ENCODE measurements at regions of chr7 and their contacts with region 1.

Region 1: GRCh38 chr7:41911792-41912191 is 208.9 kb upstream of the INHBA start:
- DNase-seq: no peak
- ATAC-seq: no peak
- H3K4me3 ChIP-seq: no peak overlapping the region
- H3K27ac ChIP-seq: no peak overlapping the region
- H3K4me1 ChIP-seq: no peaks in the 10 kb centered on the region
- H3K27me3 ChIP-seq: no peaks in the 10 kb centered on the region
- CTCF ChIP-seq: no peak
- EP300 ChIP-seq: no peak
- POLR2A ChIP-seq: no peak
- RAD21 ChIP-seq: no peak

Region 2: GRCh38 chr7:41837916-41838315 is 73.9 kb before region 1 on chr7:
- CTCF ChIA-PET with region 1: no interaction called
- POLR2A ChIA-PET with region 1: no interaction called
- in situ Hi-C with region 1: no loop called
- intact Hi-C with region 1: loop called (anchors 2 kb)
- DNase-seq: no peak
- ATAC-seq: no peak
- H3K4me3 ChIP-seq: no peak overlapping the region
- H3K27ac ChIP-seq: no peak overlapping the region
- H3K4me1 ChIP-seq: no peaks in the 10 kb centered on the region
- H3K27me3 ChIP-seq: no peaks in the 10 kb centered on the region
- CTCF ChIP-seq: no peak
- EP300 ChIP-seq: no peak
- POLR2A ChIP-seq: no peak
- RAD21 ChIP-seq: no peak

Region 3: GRCh38 chr7:42502022-42502421 is 590.2 kb after region 1 on chr7:
- CTCF ChIA-PET with region 1: no interaction called
- POLR2A ChIA-PET with region 1: no interaction called
- in situ Hi-C with region 1: no loop called
- intact Hi-C with region 1: no loop called
- DNase-seq: no peak
- ATAC-seq: no peak
- H3K4me3 ChIP-seq: no peak overlapping the region
- H3K27ac ChIP-seq: no peak overlapping the region
- H3K4me1 ChIP-seq: no peaks in the 10 kb centered on the region
- H3K27me3 ChIP-seq: no peaks in the 10 kb centered on the region
- CTCF ChIP-seq: no peak
- EP300 ChIP-seq: no peak
- POLR2A ChIP-seq: no peak
- RAD21 ChIP-seq: no peak

Region 4: DNA sequence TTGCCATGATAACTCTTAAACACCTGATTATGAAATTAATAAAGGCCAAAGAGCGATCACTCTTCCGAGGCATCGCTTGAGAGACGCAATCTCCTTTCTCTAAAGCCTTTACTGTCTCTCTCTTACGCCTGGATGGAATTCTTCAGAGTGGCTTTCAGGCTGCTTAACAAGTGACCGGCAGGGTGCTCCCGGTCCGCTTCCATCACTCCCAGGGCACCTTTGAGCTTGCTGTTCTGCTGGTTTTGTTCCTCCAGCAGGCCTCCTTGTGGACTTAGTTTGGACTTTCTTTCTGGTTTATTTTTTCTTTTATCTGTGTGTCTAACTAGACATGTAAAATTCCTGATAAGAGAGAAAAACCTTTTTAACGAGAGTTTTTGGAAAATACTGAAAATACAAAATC is 1081.2 kb after region 1 on chr7:
- CTCF ChIA-PET with region 1: no interaction called
- POLR2A ChIA-PET with region 1: no interaction called
- in situ Hi-C with region 1: no loop called
- intact Hi-C with region 1: no loop called
- DNase-seq: peak; percentile 13
- ATAC-seq: peak; percentile 78
- H3K4me3 ChIP-seq: no peak overlapping the region
- H3K27ac ChIP-seq: no peak overlapping the region
- H3K4me1 ChIP-seq: no peaks in the 10 kb centered on the region
- H3K27me3 ChIP-seq: peaks cover 0 to 3% of the 10 kb centered on the region in 2 experiments; a peak in 1 of 5 replicates
- CTCF ChIP-seq: no peak
- EP300 ChIP-seq: no peak
- POLR2A ChIP-seq: no peak
- RAD21 ChIP-seq: no peak

Measured in HepG2 (cell line).